ENCODE measurements at regions of chr1 and their contacts with region 1.

Region 1: DNA sequence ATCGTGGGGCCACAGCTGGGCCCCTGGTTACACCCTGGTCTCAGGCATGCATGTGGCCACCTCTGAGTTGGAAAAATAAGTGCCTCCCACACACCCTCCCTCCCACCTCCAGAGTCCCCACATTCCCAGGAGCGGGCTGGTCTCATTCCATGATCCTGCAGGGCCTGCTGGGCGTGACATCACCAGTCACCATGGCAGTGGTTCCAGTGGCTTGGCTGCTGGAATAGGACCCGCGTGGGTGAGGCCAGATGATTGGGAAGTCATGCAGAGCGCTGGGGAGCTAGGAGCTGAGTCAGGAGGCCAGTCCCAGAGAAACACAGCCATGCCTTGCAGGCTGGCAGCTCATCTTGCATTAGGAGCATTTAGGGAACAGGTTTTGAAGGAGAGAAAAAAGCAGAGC is 125.4 kb upstream of the TMEM51 start:
- DNase-seq: peak in 1 of 2 donors; percentile 25
- ATAC-seq: no peak
- H3K4me3 ChIP-seq: no peak overlapping the region
- H3K27ac ChIP-seq: no peak overlapping the region
- H3K4me1 ChIP-seq: no peaks in the 10 kb centered on the region
- H3K27me3 ChIP-seq: peaks cover 0 to 3% (median 0%) of the 10 kb centered on the region in 3 donors
- CTCF ChIP-seq: no peak
- POLR2A ChIP-seq: no peak

Region 2: GRCh38 chr1:14915356-14916054 is 112.6 kb before region 1 on chr1:
- in situ Hi-C with region 1: loop called in 3 of 4 experiments (anchors 10 kb)
- intact Hi-C with region 1: loop called (anchors 5 kb)
- DNase-seq: no peak
- ATAC-seq: no peak
- H3K4me3 ChIP-seq: no peak overlapping the region
- H3K27ac ChIP-seq: no peak overlapping the region
- H3K4me1 ChIP-seq: no peaks in the 10 kb centered on the region
- H3K27me3 ChIP-seq: no peaks in the 10 kb centered on the region
- CTCF ChIP-seq: peak; percentile 33 to 74 (median 59)
- POLR2A ChIP-seq: no peak

Region 3: GRCh38 chr1:14923727-14924452 is 104.2 kb before region 1 on chr1:
- in situ Hi-C with region 1: loop called in 3 of 4 experiments (anchors 10 kb)
- intact Hi-C with region 1: loop called (anchors 5 kb)
- DNase-seq: peak in 1 of 2 donors; percentile 21
- ATAC-seq: peak; percentile 65 to 71
- H3K4me3 ChIP-seq: peak overlapping the region in 1 of 4 donors; percentile 17
- H3K27ac ChIP-seq: peak overlapping the region; percentile 46 to 54 (median 48)
- H3K4me1 ChIP-seq: peaks cover 0 to 6% of the 10 kb centered on the region in 2 donors
- H3K27me3 ChIP-seq: peaks cover 20 to 33% (median 31%) of the 10 kb centered on the region in 3 donors
- CTCF ChIP-seq: no peak
- POLR2A ChIP-seq: no peak

Region 4: DNA sequence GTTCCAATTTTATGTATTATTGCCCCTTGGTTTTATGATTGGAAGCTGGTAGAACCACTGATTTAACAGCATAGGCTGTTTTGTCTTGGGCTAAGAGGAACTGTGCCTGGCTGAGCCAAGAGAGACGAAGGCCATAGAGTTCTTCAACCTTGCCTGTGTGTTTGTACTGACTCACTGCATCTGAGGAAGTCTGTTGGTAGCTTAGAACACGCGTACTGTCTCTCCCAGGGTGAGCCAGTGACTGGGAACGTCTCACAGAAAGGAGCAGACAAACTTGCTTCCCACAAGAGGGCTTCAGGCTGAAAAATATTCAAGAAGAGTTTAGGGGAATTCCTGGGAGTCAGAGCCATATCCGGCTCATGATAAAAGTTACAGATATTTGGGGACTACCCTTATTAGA is 140.4 kb after region 1 on chr1:
- in situ Hi-C with region 1: no loop called
- intact Hi-C with region 1: no loop called
- DNase-seq: no peak
- ATAC-seq: no peak
- H3K4me3 ChIP-seq: no peak overlapping the region
- H3K27ac ChIP-seq: no peak overlapping the region
- H3K4me1 ChIP-seq: no peaks in the 10 kb centered on the region
- H3K27me3 ChIP-seq: no peaks in the 10 kb centered on the region
- CTCF ChIP-seq: no peak
- POLR2A ChIP-seq: no peak